ENCODE measurements at regions of chr14 and their contacts with region 1.

Region 1: DNA sequence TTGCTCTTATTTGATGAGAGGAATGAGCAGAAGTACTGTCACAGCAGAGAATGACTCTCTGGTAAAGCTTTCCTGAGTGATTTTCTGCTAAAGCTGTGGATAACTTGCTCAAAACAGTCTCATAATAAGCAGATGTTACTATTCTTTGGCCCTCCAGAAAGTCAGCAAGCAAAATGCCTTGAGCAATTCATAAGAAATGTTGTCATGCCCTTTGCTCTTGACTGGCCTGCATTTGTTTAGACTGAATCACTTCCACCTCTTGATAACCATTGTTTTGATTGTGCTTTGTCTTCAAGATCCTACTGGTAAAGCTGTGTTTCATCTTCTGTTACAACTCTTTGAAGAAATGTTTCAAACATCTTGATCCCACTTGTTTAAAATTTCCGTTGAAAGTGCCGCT is 457.9 kb upstream of the FOXG1 start:
- DNase-seq: peak; percentile 81
- H3K4me3 ChIP-seq: no peak overlapping the region
- H3K27ac ChIP-seq: peak overlapping the region; percentile 69
- H3K4me1 ChIP-seq: peaks cover 25% of the 10 kb centered on the region
- H3K27me3 ChIP-seq: no peaks in the 10 kb centered on the region
- CTCF ChIP-seq: no peak

Region 2: GRCh38 chr14:28217743-28218142 is 91.0 kb before region 1 on chr14:
- CTCF ChIA-PET with region 1: no interaction called
- dilution Hi-C with region 1: loop called (anchors 5 kb)
- in situ Hi-C with region 1: no loop called
- intact Hi-C with region 1: no loop called
- DNase-seq: no peak
- H3K4me3 ChIP-seq: no peak overlapping the region
- H3K27ac ChIP-seq: no peak overlapping the region
- H3K4me1 ChIP-seq: no peaks in the 10 kb centered on the region
- H3K27me3 ChIP-seq: no peaks in the 10 kb centered on the region
- CTCF ChIP-seq: no peak

Region 3: DNA sequence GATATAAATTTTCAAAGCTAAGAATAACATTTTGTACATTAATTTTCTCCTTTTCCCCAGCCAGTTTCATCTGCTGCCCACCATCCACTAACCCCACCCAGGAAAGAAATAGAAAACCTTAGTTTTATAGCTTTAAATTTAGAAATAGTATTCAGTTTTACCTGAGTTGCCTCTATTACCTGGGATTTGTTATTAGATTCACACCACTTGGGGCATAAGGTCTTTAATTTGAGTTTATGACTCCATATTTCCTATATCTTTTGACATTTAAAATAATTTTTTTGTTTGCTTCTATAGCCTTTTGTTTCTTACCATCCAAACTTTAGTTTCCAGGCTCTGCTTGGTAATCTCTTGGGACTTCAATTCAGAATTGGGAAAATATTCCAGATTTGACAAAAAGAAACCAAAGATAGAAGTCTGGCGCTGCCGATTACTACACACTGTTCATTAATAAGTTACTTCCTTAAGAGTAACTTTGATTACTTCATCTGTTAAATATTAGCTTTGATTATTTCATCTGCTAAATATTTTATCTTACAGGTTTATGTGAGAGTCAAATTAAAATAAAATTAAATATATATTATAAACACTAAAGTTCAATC is 27.6 kb before region 1 on chr14:
- CTCF ChIA-PET with region 1: no interaction called
- dilution Hi-C with region 1: no loop called
- in situ Hi-C with region 1: no loop called
- intact Hi-C with region 1: no loop called
- DNase-seq: no peak
- H3K4me3 ChIP-seq: no peak overlapping the region
- H3K27ac ChIP-seq: no peak overlapping the region
- H3K4me1 ChIP-seq: no peaks in the 10 kb centered on the region
- H3K27me3 ChIP-seq: no peaks in the 10 kb centered on the region
- CTCF ChIP-seq: no peak

Region 4: DNA sequence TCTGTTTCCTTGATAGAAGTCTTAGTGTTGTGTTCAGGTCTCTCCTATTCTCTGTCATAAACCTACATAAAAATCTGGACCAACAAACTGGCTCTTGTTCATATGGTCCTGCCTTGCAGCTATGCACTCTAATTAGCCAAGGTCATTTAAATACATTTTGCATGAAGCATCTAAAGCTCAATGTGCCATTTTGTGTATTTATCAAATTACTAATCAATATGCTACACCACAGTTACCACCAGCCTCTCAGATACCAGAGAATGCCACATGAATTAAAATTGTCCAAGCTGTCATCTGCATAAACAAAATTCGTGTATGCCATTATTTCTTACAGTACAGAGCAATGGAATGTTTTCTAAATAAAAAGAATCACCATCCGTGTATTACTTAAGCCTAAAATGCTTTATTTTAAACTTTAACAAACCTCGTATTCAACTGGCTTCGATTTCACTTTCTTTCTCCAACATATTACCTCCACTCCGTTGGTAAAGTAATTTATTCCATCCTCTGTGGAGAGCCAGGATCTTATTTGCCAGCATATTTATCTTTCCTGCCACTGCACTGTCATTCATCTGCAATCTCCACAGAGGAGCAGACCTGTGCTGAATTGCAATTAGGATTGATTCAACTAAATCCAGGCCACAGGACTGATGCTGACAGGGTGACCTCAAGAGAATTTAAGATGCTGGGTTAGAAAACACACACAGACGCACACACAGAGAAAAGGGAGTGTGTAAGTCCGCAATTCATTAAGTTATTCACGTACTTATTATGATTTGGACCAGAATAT is 173.7 kb after region 1 on chr14:
- CTCF ChIA-PET with region 1: no interaction called
- dilution Hi-C with region 1: no loop called
- in situ Hi-C with region 1: no loop called
- intact Hi-C with region 1: loop called (anchors 10 kb)
- DNase-seq: no peak
- H3K4me3 ChIP-seq: no peak overlapping the region
- H3K27ac ChIP-seq: no peak overlapping the region
- H3K4me1 ChIP-seq: no peaks in the 10 kb centered on the region
- H3K27me3 ChIP-seq: no peaks in the 10 kb centered on the region
- CTCF ChIP-seq: no peak

Region 5: DNA sequence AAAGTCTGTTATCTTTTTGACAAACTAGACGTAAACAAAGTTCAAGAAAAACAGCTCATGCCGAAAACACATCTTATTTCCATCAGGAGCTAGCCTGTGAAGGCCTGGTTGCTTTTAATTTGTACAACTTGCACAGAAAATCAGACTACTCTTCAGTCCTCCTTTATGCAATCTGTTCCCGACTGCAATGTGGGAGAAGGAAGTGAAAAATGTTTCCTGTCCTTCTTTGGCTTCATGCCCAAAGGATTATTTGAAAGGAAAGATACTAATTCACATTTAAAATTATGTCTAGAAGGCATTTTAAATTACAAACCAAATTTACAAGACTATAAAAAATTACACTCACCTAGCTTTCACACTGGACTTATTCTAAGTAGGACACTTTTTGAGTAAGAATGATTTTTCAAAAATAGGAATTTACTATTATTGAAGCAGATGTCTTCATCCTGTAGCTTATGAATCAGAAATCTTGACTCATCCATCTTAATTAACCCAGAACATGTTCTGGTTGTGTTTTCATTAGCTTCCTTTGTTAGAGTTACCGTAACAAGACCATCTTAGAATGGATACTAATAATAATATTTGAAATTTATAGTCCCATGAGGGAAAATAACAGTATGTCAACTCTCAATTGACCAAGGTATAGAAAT is 1346.3 kb after region 1 on chr14:
- CTCF ChIA-PET with region 1: no interaction called
- dilution Hi-C with region 1: no loop called
- in situ Hi-C with region 1: no loop called
- intact Hi-C with region 1: no loop called
- DNase-seq: peak; percentile 28
- H3K4me3 ChIP-seq: no peak overlapping the region
- H3K27ac ChIP-seq: no peak overlapping the region
- H3K4me1 ChIP-seq: no peaks in the 10 kb centered on the region
- H3K27me3 ChIP-seq: no peaks in the 10 kb centered on the region
- CTCF ChIP-seq: no peak